Endothelial cell of umbilical vein (primary cell): ENCODE measurements at regions of chr18 and their contacts with region 1.

Region 1: GRCh38 chr18:47772374-47773248 is 157.8 kb downstream of the SMAD2 start:
- DNase-seq: peak; percentile 76
- H3K4me3 ChIP-seq: no peak overlapping the region
- H3K27ac ChIP-seq: no peak overlapping the region
- H3K4me1 ChIP-seq: no peaks in the 10 kb centered on the region
- H3K27me3 ChIP-seq: peaks cover 4% of the 10 kb centered on the region in 2 experiments
- CTCF ChIP-seq: peak; percentile 73 to 95
- POLR2A ChIP-seq: no peak

Region 2: GRCh38 chr18:47075098-47075883 is 697.3 kb before region 1 on chr18:
- CTCF ChIA-PET with region 1: no interaction called
- POLR2A ChIA-PET with region 1: no interaction called
- dilution Hi-C with region 1: no loop called
- intact Hi-C with region 1: no loop called
- DNase-seq: no peak
- H3K4me3 ChIP-seq: no peak overlapping the region
- H3K27ac ChIP-seq: no peak overlapping the region
- H3K4me1 ChIP-seq: no peaks in the 10 kb centered on the region
- H3K27me3 ChIP-seq: no peaks in the 10 kb centered on the region
- CTCF ChIP-seq: no peak
- POLR2A ChIP-seq: no peak

Region 3: GRCh38 chr18:47756364-47757016 is 16.1 kb before region 1 on chr18:
- CTCF ChIA-PET with region 1: interaction called, 25 read pairs
- POLR2A ChIA-PET with region 1: no interaction called
- dilution Hi-C with region 1: no loop called
- intact Hi-C with region 1: no loop called
- DNase-seq: peak; percentile 62
- H3K4me3 ChIP-seq: no peak overlapping the region
- H3K27ac ChIP-seq: no peak overlapping the region
- H3K4me1 ChIP-seq: no peaks in the 10 kb centered on the region
- H3K27me3 ChIP-seq: no peaks in the 10 kb centered on the region
- CTCF ChIP-seq: peak; percentile 92 to 95
- POLR2A ChIP-seq: no peak

Region 4: DNA sequence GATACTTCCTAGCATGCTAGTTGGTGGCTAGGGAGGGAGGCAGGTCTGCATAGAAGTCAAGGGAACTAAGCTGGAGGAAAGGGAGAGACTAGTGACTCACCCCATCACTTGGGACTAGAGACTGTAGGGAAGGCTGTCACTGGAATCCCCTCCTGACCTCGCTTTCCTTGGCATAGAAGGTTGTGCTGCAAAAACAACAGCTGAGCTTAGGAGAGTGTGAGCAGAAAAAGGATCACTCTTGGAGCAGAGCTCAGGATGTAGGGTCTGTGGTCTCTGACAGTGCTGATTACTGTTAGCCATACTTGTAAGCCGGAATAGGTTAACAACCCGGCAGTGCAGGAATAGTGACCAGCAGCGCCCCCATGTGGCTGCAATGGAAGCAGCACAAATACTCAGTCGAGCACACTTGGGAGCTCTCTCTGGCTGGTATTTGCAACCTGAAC is 224.7 kb after region 1 on chr18:
- CTCF ChIA-PET with region 1: interaction called, 6 read pairs
- POLR2A ChIA-PET with region 1: no interaction called
- dilution Hi-C with region 1: no loop called
- intact Hi-C with region 1: loop called (anchors 1 kb)
- DNase-seq: no peak
- H3K4me3 ChIP-seq: no peak overlapping the region
- H3K27ac ChIP-seq: no peak overlapping the region
- H3K4me1 ChIP-seq: no peaks in the 10 kb centered on the region
- H3K27me3 ChIP-seq: peaks cover 0 to 2% of the 10 kb centered on the region in 2 experiments
- CTCF ChIP-seq: peak in 1 of 2 donors; percentile 60
- POLR2A ChIP-seq: no peak

Region 5: GRCh38 chr18:48017635-48018034 is 245.0 kb after region 1 on chr18:
- CTCF ChIA-PET with region 1: interaction called, 20 read pairs
- POLR2A ChIA-PET with region 1: no interaction called
- dilution Hi-C with region 1: no loop called
- intact Hi-C with region 1: loop called (anchors 1 kb)
- DNase-seq: no peak
- H3K4me3 ChIP-seq: no peak overlapping the region
- H3K27ac ChIP-seq: no peak overlapping the region
- H3K4me1 ChIP-seq: no peaks in the 10 kb centered on the region
- H3K27me3 ChIP-seq: peaks cover 5 to 44% of the 10 kb centered on the region in 2 experiments
- CTCF ChIP-seq: no peak
- POLR2A ChIP-seq: no peak

Region 6: GRCh38 chr18:48030616-48031480 is 258.2 kb after region 1 on chr18:
- CTCF ChIA-PET with region 1: interaction called, 11 read pairs
- POLR2A ChIA-PET with region 1: no interaction called
- dilution Hi-C with region 1: no loop called
- intact Hi-C with region 1: no loop called
- DNase-seq: peak; percentile 35
- H3K4me3 ChIP-seq: no peak overlapping the region
- H3K27ac ChIP-seq: no peak overlapping the region
- H3K4me1 ChIP-seq: no peaks in the 10 kb centered on the region
- H3K27me3 ChIP-seq: no peaks in the 10 kb centered on the region
- CTCF ChIP-seq: peak; percentile 66 to 72
- POLR2A ChIP-seq: no peak